Testis (tissue), 5 donors: ENCODE measurements at regions of chr17 and their contacts with region 1.

Region 1: GRCh38 chr17:1730328-1731193 is 6.1 kb downstream of the WDR81 start:
- DNase-seq: peak; percentile 94
- H3K4me3 ChIP-seq: peak overlapping the region in 1 of 2 donors; percentile 14
- H3K27ac ChIP-seq: peak overlapping the region; percentile 99
- H3K4me1 ChIP-seq: peaks cover 56% of the 10 kb centered on the region
- H3K27me3 ChIP-seq: no peaks in the 10 kb centered on the region
- CTCF ChIP-seq: no peak
- POLR2A ChIP-seq: no peak

Region 2: DNA sequence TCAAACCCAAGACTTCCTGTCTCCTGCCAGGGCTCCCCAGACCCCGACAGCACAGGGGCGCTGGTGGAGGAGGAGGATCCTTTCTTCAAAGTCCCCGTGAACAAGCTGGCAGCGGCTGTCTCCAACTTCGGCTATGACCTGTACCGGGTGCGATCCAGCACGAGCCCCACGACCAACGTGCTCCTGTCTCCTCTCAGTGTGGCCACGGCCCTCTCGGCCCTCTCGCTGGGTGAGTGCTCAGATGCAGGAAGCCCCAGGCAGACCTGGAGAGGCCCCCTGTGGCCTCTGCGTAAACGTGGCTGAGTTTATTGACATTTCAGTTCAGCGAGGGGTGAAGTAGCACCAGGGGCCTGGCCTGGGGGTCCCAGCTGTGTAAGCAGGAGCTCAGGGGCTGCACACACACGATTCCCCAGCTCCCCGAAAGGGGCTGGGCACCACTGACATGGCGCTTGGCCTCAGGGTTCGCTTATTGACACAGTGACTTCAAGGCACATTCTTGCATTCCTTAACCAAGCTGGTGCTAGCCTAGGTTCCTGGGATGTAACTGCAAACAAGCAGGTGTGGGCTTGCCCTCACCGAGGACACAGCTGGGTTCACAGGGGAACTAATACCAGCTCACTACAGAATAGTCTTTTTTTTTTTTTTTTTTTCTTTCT is 39.4 kb after region 1 on chr17:
- intact Hi-C with region 1: loop called (anchors 5 kb)
- DNase-seq: no peak
- H3K4me3 ChIP-seq: no peak overlapping the region
- H3K27ac ChIP-seq: no peak overlapping the region
- H3K4me1 ChIP-seq: peaks cover 46% of the 10 kb centered on the region
- H3K27me3 ChIP-seq: no peaks in the 10 kb centered on the region
- CTCF ChIP-seq: no peak
- POLR2A ChIP-seq: no peak

Region 3: GRCh38 chr17:1783834-1784611 is 53.5 kb after region 1 on chr17:
- intact Hi-C with region 1: loop called (anchors 5 kb)
- DNase-seq: peak; percentile 91
- H3K4me3 ChIP-seq: no peak overlapping the region
- H3K27ac ChIP-seq: peak overlapping the region; percentile 93 to 96
- H3K4me1 ChIP-seq: peaks cover 62% of the 10 kb centered on the region
- H3K27me3 ChIP-seq: no peaks in the 10 kb centered on the region
- CTCF ChIP-seq: peak; percentile 87 to 95 (median 93)
- POLR2A ChIP-seq: peak; percentile 27